Activated CD8-positive, alpha-beta T cell treated with anti-CD3 and anti-CD28 coated beads for 36 hours (primary cell): ENCODE measurements at regions of chr1 and their contacts with region 1.

Region 1: GRCh38 chr1:172826096-172826743 is 167.3 kb downstream of the FASLG start:
- DNase-seq: peak; percentile 26
- ATAC-seq: peak; percentile 61
- H3K4me3 Mint-ChIP-seq: no peak overlapping the region
- H3K27ac Mint-ChIP-seq: no peak overlapping the region
- H3K4me1 Mint-ChIP-seq: peaks cover 2% of the 10 kb centered on the region
- H3K27me3 Mint-ChIP-seq: peaks cover 9% of the 10 kb centered on the region
- CTCF ChIP-seq: peak; percentile 72

Region 2: GRCh38 chr1:172845371-172845770 is 19.2 kb after region 1 on chr1:
- CTCF ChIA-PET with region 1: interaction called, 11 read pairs
- POLR2A ChIA-PET with region 1: interaction called, 3 read pairs
- intact Hi-C with region 1: no loop called
- DNase-seq: peak; percentile 89
- ATAC-seq: peak; percentile 99
- H3K4me3 Mint-ChIP-seq: no peak overlapping the region
- H3K27ac Mint-ChIP-seq: no peak overlapping the region
- H3K4me1 Mint-ChIP-seq: peaks cover 18% of the 10 kb centered on the region
- H3K27me3 Mint-ChIP-seq: peaks cover 12% of the 10 kb centered on the region
- CTCF ChIP-seq: no peak

Region 3: GRCh38 chr1:173195596-173196088 is 369.4 kb after region 1 on chr1:
- CTCF ChIA-PET with region 1: interaction called, 47 read pairs
- POLR2A ChIA-PET with region 1: no interaction called
- intact Hi-C with region 1: loop called (anchors 5 kb)
- DNase-seq: peak; percentile 89
- ATAC-seq: peak; percentile 93
- H3K4me3 Mint-ChIP-seq: no peak overlapping the region
- H3K27ac Mint-ChIP-seq: peak overlapping the region; percentile 53
- H3K4me1 Mint-ChIP-seq: peaks cover 21% of the 10 kb centered on the region
- H3K27me3 Mint-ChIP-seq: no peaks in the 10 kb centered on the region
- CTCF ChIP-seq: no peak

Region 4: DNA sequence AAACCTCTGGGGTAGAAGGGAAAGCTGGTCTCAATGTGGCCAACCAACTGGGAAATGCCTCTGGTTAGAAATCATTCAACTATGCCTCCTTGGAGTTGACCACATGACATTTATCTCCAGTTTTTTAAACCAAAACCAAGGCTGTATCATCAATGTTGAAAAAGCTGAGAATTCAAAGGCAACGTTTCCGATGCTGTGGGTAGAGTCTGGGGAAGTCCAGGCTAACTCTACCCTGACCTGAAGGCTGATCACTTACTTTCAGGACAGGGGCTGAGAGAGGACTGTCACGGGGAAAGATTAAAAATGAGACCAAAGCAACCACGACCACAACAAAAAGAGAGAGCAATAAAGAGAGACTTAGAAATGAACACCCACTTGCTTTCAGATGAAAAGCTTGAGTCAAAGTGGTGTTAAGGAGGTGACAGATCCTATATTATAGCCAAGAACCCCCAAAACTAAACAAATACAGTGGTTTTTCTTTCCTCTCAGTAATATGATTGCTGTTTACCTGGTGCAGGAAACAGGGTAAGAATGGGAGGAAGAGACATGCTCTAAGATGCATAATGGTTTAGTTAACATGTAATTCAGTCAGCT is 471.7 kb after region 1 on chr1:
- CTCF ChIA-PET with region 1: no interaction called
- POLR2A ChIA-PET with region 1: no interaction called
- intact Hi-C with region 1: no loop called
- DNase-seq: peak; percentile 84
- ATAC-seq: peak; percentile 93
- H3K4me3 Mint-ChIP-seq: no peak overlapping the region
- H3K27ac Mint-ChIP-seq: peak overlapping the region; percentile 25
- H3K4me1 Mint-ChIP-seq: peaks cover 61% of the 10 kb centered on the region
- H3K27me3 Mint-ChIP-seq: no peaks in the 10 kb centered on the region
- CTCF ChIP-seq: no peak